HepG2 (cell line): ENCODE measurements at regions of chr14 and their contacts with region 1.

Region 1: DNA sequence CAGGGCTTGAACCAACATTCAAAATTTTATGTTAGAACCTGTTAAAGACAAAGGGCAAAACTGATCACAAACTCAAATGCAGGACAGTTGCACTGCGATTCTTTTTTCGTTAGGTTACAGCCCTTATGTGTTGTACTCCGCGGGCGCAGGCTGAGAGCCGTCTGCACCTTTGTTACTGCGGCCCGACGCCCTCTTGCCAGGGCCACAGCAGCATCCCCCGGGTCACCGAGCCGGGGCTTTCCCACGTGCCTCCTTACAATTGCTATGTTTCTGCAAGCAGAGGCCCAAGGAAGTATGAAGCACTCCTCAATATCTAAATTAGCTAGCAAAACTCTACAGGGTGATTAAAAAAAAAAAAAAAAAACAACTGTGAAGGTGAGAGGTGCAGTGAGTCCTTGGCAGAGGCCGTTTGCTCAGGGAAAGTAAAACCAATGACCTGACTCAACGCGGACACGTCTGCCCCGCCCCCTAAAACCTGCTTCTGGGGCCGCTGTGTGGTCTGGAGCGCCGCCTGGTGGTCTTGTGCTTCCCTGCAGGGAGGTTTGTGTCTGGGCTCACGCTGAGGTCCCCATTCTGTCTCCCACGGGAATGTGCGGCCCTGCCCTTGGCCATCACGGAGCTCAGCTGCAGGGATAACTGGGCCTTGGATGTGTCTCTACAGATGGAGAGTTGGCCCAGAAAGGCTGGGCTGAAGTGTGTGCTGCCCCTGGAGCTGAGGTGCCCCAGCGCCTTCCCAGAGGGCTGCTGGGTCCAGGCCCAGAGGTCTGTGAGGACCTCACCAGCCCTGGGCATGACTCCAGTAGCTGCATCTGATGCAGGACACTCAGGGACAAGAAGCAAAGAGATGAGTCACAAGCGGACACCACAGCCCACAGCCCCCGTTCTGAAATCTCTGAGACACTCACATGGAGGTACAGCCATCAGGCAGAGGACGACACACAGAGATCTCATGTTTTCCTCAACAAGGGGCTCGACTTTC is 418.5 kb downstream of the TMEM121 start:
- DNase-seq: peak; percentile 67
- ATAC-seq: peak; percentile 87
- H3K4me3 ChIP-seq: peak overlapping the region in 2 of 3 experiments; percentile 17 to 54; a peak in 5 of 6 replicates
- H3K27ac ChIP-seq: peak overlapping the region; percentile 58
- H3K4me1 ChIP-seq: peaks cover 22% of the 10 kb centered on the region
- H3K27me3 ChIP-seq: peaks cover 0 to under 1% of the 10 kb centered on the region in 2 experiments; a peak in 1 of 5 replicates
- CTCF ChIP-seq: peak; percentile 97
- EP300 ChIP-seq: no peak
- POLR2A ChIP-seq: no peak
- RAD21 ChIP-seq: peak; percentile 85

Region 2: GRCh38 chr14:105666420-105666819 is 278.5 kb before region 1 on chr14:
- CTCF ChIA-PET with region 1: no interaction called
- POLR2A ChIA-PET with region 1: no interaction called
- in situ Hi-C with region 1: loop called (anchors 10 kb)
- intact Hi-C with region 1: loop called (anchors 5 kb)
- DNase-seq: no peak
- ATAC-seq: peak; percentile 50; the same call in 2 of the 3 replicates
- H3K4me3 ChIP-seq: no peak overlapping the region
- H3K27ac ChIP-seq: no peak overlapping the region
- H3K4me1 ChIP-seq: no peaks in the 10 kb centered on the region
- H3K27me3 ChIP-seq: peaks cover 0 to 20% of the 10 kb centered on the region in 2 experiments; a peak in 4 of 5 replicates
- CTCF ChIP-seq: no peak
- EP300 ChIP-seq: no peak
- POLR2A ChIP-seq: no peak
- RAD21 ChIP-seq: no peak

Region 3: GRCh38 chr14:105682940-105683570 is 261.9 kb before region 1 on chr14:
- CTCF ChIA-PET with region 1: no interaction called
- POLR2A ChIA-PET with region 1: no interaction called
- in situ Hi-C with region 1: loop called (anchors 10 kb)
- intact Hi-C with region 1: no loop called
- DNase-seq: no peak
- ATAC-seq: no peak
- H3K4me3 ChIP-seq: no peak overlapping the region
- H3K27ac ChIP-seq: no peak overlapping the region
- H3K4me1 ChIP-seq: no peaks in the 10 kb centered on the region
- H3K27me3 ChIP-seq: no peaks in the 10 kb centered on the region
- CTCF ChIP-seq: no peak
- EP300 ChIP-seq: no peak
- POLR2A ChIP-seq: no peak
- RAD21 ChIP-seq: no peak

Region 4: GRCh38 chr14:106080924-106081323 is 136.0 kb after region 1 on chr14:
- CTCF ChIA-PET with region 1: no interaction called
- POLR2A ChIA-PET with region 1: no interaction called
- in situ Hi-C with region 1: no loop called
- intact Hi-C with region 1: no loop called
- DNase-seq: no peak
- ATAC-seq: no peak
- H3K4me3 ChIP-seq: no peak overlapping the region
- H3K27ac ChIP-seq: no peak overlapping the region
- H3K4me1 ChIP-seq: no peaks in the 10 kb centered on the region
- H3K27me3 ChIP-seq: no peaks in the 10 kb centered on the region; a peak in 1 of 5 replicates
- CTCF ChIP-seq: no peak
- EP300 ChIP-seq: no peak
- POLR2A ChIP-seq: no peak
- RAD21 ChIP-seq: no peak